CD4-positive, alpha-beta T cell (primary cell): ENCODE measurements at regions of chr17 and their contacts with region 1.

Region 1: DNA sequence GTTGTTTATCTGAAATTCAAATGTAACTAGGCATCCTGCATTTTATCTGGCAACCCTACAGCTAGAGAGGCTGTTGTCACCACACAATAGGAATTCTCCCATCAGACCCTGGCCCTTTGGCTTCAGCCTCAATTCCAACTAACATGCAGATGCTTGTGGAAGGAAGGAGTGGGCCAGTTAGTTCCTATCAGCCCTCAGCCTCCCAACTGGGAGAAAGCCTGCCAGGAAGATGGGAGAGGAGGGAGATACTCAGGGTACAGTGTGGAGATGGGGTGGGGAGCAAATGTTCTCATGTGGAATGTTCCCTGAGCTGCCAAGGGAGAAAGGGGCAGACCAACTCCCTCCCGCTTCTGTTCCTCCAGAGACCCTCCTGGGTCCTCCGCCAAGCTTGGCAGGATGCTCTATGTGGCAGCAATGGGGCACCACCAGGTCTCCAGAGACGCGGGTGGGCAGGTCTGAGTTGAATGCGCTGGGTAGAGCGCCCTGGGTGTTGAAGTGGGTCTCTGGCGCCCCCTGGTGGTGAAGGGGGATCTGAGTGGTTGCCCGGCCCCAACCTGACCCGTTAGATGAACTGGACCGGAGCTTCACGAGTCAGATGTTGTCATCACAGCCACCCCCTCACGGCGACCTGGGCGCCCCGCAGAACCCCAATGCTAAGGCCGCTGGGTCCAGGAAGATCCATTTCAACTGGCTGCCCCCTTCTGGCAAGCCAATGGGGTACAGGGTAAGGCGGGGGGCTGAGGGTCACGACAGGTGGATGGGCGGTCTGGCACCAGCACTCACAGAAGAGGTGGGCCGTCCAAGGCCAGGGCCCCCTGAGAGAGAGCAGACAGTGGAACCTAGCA is 15.2 kb downstream of the GALK1 start:
- DNase-seq: peak; percentile 75 to 94 (median 86)
- ATAC-seq: peak; percentile 70
- H3K4me3 ChIP-seq: no peak overlapping the region
- H3K4me3 Mint-ChIP-seq: peak overlapping the region; percentile 20
- H3K27ac ChIP-seq: no peak overlapping the region
- H3K27ac Mint-ChIP-seq: no peak overlapping the region
- H3K4me1 ChIP-seq: peaks cover 34% of the 10 kb centered on the region
- H3K4me1 Mint-ChIP-seq: peaks cover 10% of the 10 kb centered on the region
- H3K27me3 ChIP-seq: no peaks in the 10 kb centered on the region
- H3K27me3 Mint-ChIP-seq: peaks cover 3% of the 10 kb centered on the region
- CTCF ChIP-seq: peak; percentile 91

Region 2: GRCh38 chr17:75430159-75430974 is 319.4 kb before region 1 on chr17:
- CTCF ChIA-PET with region 1: no interaction called
- POLR2A ChIA-PET with region 1: no interaction called
- intact Hi-C with region 1: loop called (anchors 1 to 2 kb)
- DNase-seq: no peak
- ATAC-seq: no peak
- H3K4me3 ChIP-seq: no peak overlapping the region
- H3K4me3 Mint-ChIP-seq: no peak overlapping the region
- H3K27ac ChIP-seq: no peak overlapping the region
- H3K27ac Mint-ChIP-seq: no peak overlapping the region
- H3K4me1 ChIP-seq: peaks cover 12% of the 10 kb centered on the region
- H3K4me1 Mint-ChIP-seq: peaks cover 16% of the 10 kb centered on the region
- H3K27me3 ChIP-seq: no peaks in the 10 kb centered on the region
- H3K27me3 Mint-ChIP-seq: peaks cover 6% of the 10 kb centered on the region
- CTCF ChIP-seq: no peak

Region 3: GRCh38 chr17:75667021-75667790 is 82.6 kb before region 1 on chr17 and contains the starts of genes RECQL5 and SAP30BP:
- CTCF ChIA-PET with region 1: interaction called, 12 read pairs
- POLR2A ChIA-PET with region 1: interaction called, 15 read pairs
- intact Hi-C with region 1: no loop called
- DNase-seq: peak; percentile 97 to 99 (median 98)
- ATAC-seq: peak; percentile 100
- H3K4me3 ChIP-seq: peak within 1 kb of the TSS; percentile 76
- H3K4me3 Mint-ChIP-seq: peak within 1 kb of the TSS; percentile 72
- H3K27ac ChIP-seq: peak within 1 kb of the TSS; percentile 87 to 90
- H3K27ac Mint-ChIP-seq: peak within 1 kb of the TSS; percentile 57
- H3K4me1 ChIP-seq: peaks cover 23% of the 10 kb centered on the region
- H3K4me1 Mint-ChIP-seq: peaks cover 26% of the 10 kb centered on the region
- H3K27me3 ChIP-seq: no peaks in the 10 kb centered on the region
- H3K27me3 Mint-ChIP-seq: no peaks in the 10 kb centered on the region
- CTCF ChIP-seq: no peak
- total RNA-seq, gene RECQL5: 16.4 to 17.7 TPM
- total RNA-seq, gene SAP30BP: 209 to 227 TPM

Region 4: DNA sequence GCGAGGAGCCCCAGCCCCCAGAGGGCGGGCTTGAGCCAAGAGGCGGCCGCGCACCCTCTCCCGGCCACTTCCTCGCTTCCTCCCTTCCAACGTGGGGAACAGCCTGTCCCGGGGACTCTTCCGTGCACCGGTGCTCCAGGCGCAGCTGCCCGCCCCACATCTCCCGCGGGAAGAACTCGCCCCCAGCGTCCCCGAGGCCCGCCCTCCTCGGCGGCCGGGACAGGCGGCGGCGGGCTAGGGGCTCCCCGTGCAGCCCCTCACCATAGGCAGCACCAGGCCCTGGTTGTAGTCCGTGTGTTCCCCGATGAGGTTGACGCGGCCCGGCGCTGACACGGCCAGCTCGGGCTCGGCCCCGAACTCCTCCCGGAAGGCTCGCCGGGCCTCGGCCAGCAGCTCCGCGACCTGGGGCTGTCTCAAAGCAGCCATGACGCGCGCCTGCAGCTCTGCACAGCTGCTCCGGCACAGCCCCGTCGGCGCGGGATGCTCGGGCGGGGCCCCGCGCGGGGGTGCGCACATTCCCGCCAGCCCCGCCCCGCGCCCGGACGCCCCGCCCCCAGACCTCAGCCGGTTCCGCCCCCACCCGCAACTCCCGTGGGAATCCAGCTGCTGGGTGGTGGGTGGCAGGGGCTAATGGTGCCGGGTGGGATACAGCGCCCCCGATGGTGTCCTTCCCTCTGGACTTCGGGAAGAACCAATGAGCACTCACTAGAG is 15.1 kb after region 1 on chr17 and contains the start of gene GALK1:
- CTCF ChIA-PET with region 1: interaction called, 47 read pairs
- POLR2A ChIA-PET with region 1: interaction called, 22 read pairs
- intact Hi-C with region 1: no loop called
- DNase-seq: peak; percentile 58 to 89 (median 70)
- ATAC-seq: peak; percentile 95
- H3K4me3 ChIP-seq: peak within 1 kb of the TSS; percentile 65
- H3K4me3 Mint-ChIP-seq: peak within 1 kb of the TSS; percentile 74
- H3K27ac ChIP-seq: no peak within 1 kb of the TSS
- H3K27ac Mint-ChIP-seq: peak within 1 kb of the TSS; percentile 44
- H3K4me1 ChIP-seq: peaks cover 24% of the 10 kb centered on the region
- H3K4me1 Mint-ChIP-seq: peaks cover 16% of the 10 kb centered on the region
- H3K27me3 ChIP-seq: no peaks in the 10 kb centered on the region
- H3K27me3 Mint-ChIP-seq: no peaks in the 10 kb centered on the region
- CTCF ChIP-seq: peak; percentile 27
- total RNA-seq, gene GALK1: 5.9 to 6.0 TPM

Region 5: DNA sequence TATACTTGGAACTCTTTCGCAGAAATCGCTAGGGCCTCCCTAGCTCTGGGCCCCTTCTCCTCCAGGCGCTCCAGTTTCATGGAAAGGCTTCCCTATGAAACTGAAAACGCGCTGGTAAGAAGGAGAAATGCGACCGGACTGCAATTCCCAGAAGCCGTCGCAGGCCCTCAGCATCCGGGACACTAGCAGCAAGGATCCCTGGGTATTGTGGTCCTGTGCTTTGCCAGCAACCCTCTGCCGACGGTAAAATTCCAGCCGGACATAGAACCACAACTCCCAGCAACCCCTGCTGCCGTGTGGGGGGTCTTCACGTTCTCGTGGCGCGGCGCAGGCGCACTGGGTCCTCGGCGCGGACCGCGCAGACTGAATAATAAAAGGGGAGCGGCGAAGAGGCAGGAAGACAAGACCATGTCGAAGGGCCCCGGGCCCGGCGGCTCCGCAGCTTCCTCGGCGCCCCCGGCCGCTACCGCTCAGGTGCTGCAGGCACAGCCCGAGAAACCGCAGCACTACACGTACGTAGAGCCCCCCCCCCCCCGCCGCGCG is 34.8 kb after region 1 on chr17 and contains the start of gene UNK:
- CTCF ChIA-PET with region 1: interaction called, 25 read pairs
- POLR2A ChIA-PET with region 1: interaction called, 58 read pairs
- intact Hi-C with region 1: loop called in 1 of 2 experiments (anchors 5 kb)
- DNase-seq: peak; percentile 90 to 99 (median 94)
- ATAC-seq: peak; percentile 63
- H3K4me3 ChIP-seq: peak within 1 kb of the TSS; percentile 69
- H3K4me3 Mint-ChIP-seq: peak within 1 kb of the TSS; percentile 92
- H3K27ac ChIP-seq: peak within 1 kb of the TSS; percentile 99 to 100
- H3K27ac Mint-ChIP-seq: peak within 1 kb of the TSS; percentile 93
- H3K4me1 ChIP-seq: peaks cover 45% of the 10 kb centered on the region
- H3K4me1 Mint-ChIP-seq: peaks cover 52% of the 10 kb centered on the region
- H3K27me3 ChIP-seq: no peaks in the 10 kb centered on the region
- H3K27me3 Mint-ChIP-seq: peaks cover 3% of the 10 kb centered on the region
- CTCF ChIP-seq: no peak
- total RNA-seq, gene UNK: 33.7 to 36.1 TPM

Region 6: DNA sequence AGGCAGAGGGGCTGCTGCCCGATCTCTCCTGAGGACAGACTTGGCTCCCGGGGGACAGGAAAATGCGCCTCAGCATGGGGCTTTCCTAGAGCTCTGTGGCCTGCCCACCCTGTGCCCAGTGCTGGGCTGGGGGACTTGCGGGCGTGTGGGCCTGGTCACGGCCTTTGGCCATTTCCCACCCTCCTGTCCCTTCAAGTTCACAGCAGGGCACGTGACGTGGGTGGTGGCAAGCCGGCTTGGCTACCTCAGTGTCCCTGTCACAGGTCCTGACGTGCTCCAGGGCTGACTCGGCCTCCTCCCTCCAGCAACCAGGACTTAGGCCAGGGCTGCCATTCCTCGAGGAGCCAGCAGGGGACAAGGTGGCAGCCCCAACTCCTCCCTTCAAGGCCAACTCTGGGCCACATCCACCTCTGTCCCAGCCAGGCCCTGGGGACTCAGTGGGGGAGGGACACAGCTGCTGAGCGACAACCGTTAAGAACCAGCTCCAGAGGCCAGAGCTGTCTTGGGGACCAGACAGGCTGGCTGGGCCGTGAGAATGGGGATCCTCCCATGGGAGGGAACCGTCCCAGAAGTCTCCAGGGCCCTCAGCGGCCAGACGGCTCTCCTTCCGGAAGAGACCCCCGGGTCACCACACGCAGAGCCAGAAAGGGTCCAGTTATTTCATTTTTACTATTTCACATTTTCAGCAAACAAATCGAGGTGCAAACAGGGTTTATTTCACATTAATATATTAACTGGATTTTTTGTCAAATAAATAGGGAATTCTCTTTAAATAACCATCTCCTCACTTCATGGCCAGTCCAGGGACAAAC is 95.5 kb after region 1 on chr17:
- CTCF ChIA-PET with region 1: interaction called, 18 read pairs
- POLR2A ChIA-PET with region 1: interaction called, 4 read pairs
- intact Hi-C with region 1: loop called in 1 of 2 experiments (anchors 1 kb)
- DNase-seq: peak in 13 of 14 experiments; percentile 40 to 84 (median 55)
- ATAC-seq: peak; percentile 54
- H3K4me3 ChIP-seq: peak overlapping the region; percentile 81
- H3K4me3 Mint-ChIP-seq: peak overlapping the region; percentile 81
- H3K27ac ChIP-seq: peak overlapping the region; percentile 94 to 95
- H3K27ac Mint-ChIP-seq: peak overlapping the region; percentile 76
- H3K4me1 ChIP-seq: peaks cover 66% of the 10 kb centered on the region
- H3K4me1 Mint-ChIP-seq: peaks cover 26% of the 10 kb centered on the region
- H3K27me3 ChIP-seq: no peaks in the 10 kb centered on the region
- H3K27me3 Mint-ChIP-seq: no peaks in the 10 kb centered on the region
- CTCF ChIP-seq: peak; percentile 55

Region 7: GRCh38 chr17:75896415-75897159 is 146.8 kb after region 1 on chr17 and contains the start of gene TRIM65:
- CTCF ChIA-PET with region 1: interaction called, 10 read pairs
- POLR2A ChIA-PET with region 1: no interaction called
- intact Hi-C with region 1: no loop called
- DNase-seq: peak; percentile 55 to 91 (median 74)
- ATAC-seq: peak; percentile 85
- H3K4me3 ChIP-seq: peak within 1 kb of the TSS; percentile 57
- H3K4me3 Mint-ChIP-seq: peak within 1 kb of the TSS; percentile 88
- H3K27ac ChIP-seq: peak within 1 kb of the TSS in 1 of 2 donors; percentile 29
- H3K27ac Mint-ChIP-seq: peak within 1 kb of the TSS; percentile 78
- H3K4me1 ChIP-seq: peaks cover 33% of the 10 kb centered on the region
- H3K4me1 Mint-ChIP-seq: peaks cover 25% of the 10 kb centered on the region
- H3K27me3 ChIP-seq: no peaks in the 10 kb centered on the region
- H3K27me3 Mint-ChIP-seq: no peaks in the 10 kb centered on the region
- CTCF ChIP-seq: peak; percentile 33
- total RNA-seq, gene TRIM65: 9.9 to 11.7 TPM